ENCODE measurements at regions of chr21 and their contacts with region 1.

Region 1: DNA sequence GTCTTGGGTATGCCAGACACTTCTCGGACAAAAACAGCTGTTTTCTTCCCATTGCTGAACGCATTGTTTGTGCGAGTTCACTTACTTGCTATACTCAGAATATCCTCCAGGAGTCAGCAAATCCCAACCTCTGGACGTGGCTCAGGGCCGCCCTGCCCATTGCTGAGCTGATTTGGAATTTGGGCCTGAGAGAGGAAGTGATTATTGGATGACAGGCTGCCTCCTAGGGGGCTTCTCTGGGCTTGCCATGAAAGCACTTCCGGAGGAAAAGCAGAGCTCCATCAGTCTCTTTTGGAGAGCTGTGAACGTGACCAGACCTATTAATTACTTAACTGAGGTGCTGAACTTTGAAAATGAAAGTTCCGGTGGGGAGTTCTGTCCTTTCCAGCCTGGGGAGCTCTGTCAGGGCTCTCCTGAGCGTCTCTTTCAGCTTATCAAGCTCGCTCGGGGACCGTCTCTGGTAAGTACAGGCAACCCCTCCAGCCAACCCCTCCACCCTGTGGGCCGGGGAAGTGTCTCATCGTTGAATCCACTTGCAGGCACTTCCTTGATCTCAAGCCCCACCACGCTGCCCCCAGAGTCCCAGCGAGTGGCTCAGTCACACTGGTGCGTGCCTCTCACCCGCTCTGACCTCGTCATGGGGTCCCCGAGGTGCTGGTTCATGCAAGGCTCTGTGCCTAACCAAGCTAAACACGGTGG is 76.9 kb downstream of the CLIC6 start:
- DNase-seq: peak; percentile 34 to 77
- ATAC-seq: peak; percentile 80 to 93 (median 93)
- H3K4me3 ChIP-seq: no peak overlapping the region
- H3K4me3 Mint-ChIP-seq: peak overlapping the region; percentile 72
- H3K27ac ChIP-seq: no peak overlapping the region
- H3K27ac Mint-ChIP-seq: peak overlapping the region in 1 of 2 donors; percentile 57
- H3K4me1 ChIP-seq: peaks cover 7% of the 10 kb centered on the region
- H3K4me1 Mint-ChIP-seq: peaks cover 6% of the 10 kb centered on the region in 2 donors
- H3K27me3 ChIP-seq: no peaks in the 10 kb centered on the region
- H3K27me3 Mint-ChIP-seq: peaks cover 13 to 21% of the 10 kb centered on the region in 2 donors
- CTCF ChIP-seq: peak; percentile 88

Region 2: DNA sequence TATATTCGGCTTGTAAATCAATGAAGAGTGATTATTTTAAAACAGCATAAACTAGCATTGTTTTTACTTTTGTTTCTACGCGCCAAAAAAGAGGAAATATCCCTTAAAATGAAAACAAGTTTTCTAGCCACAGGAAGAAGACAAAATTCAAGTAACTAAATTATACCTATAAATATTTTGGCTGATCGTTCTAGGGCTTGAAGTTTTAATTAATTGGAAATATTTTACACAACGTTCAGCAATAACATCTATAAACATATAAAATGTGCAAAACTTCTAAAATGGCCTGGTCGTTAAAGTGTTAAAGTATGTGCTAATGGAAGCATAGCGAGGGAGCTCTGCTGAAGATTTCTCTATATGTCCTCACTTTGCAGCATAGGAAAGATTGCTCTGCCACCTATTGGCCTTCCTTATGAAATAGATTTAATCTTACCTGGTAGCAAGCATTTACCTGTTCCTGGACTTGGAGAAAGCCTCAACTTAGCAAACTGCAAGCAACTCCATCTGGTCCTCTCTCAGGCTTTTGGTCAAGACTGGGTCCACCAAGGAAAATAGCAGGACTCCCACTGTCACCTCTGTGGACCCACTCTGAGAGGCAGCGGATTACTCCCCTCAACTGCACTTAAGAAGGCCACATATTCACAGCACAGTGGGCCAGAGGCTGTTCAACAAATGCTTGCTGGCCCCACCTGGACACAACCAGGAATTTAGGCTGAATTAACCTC is 654.7 kb after region 1 on chr21:
- intact Hi-C with region 1: loop called (anchors 1 kb)
- DNase-seq: peak; percentile 15 to 81
- ATAC-seq: peak; percentile 64 to 83 (median 77)
- H3K4me3 ChIP-seq: no peak overlapping the region
- H3K4me3 Mint-ChIP-seq: no peak overlapping the region
- H3K27ac ChIP-seq: no peak overlapping the region
- H3K27ac Mint-ChIP-seq: no peak overlapping the region
- H3K4me1 ChIP-seq: no peaks in the 10 kb centered on the region
- H3K4me1 Mint-ChIP-seq: no peaks in the 10 kb centered on the region
- H3K27me3 ChIP-seq: no peaks in the 10 kb centered on the region
- H3K27me3 Mint-ChIP-seq: peaks cover 17 to 33% of the 10 kb centered on the region in 2 donors
- CTCF ChIP-seq: peak; percentile 62

Region 3: DNA sequence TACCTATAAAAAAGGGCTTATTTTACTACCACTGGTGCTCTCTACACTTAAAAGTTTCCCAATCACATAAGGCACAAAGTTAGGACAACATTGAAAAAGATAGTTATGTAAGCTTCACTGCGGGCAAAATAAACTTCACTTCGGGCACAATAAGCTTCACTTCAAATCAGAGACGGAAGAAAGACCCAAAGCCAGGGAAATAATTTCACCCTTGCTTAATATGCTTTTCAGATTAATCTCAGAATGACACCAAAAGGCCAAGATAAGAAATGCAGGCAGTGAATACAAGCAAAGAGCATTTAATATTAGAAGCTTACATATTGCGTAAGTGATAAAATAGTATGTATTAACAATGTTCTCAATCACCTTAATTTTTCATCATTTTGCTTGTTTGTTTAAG is 870.4 kb after region 1 on chr21:
- intact Hi-C with region 1: loop called (anchors 10 kb)
- DNase-seq: peak in 1 of 2 donors; percentile 32
- ATAC-seq: no peak
- H3K4me3 ChIP-seq: no peak overlapping the region
- H3K4me3 Mint-ChIP-seq: no peak overlapping the region
- H3K27ac ChIP-seq: no peak overlapping the region
- H3K27ac Mint-ChIP-seq: no peak overlapping the region
- H3K4me1 ChIP-seq: no peaks in the 10 kb centered on the region
- H3K4me1 Mint-ChIP-seq: peaks cover 8 to 17% of the 10 kb centered on the region in 2 donors
- H3K27me3 ChIP-seq: no peaks in the 10 kb centered on the region
- H3K27me3 Mint-ChIP-seq: peaks cover 21 to 54% of the 10 kb centered on the region in 2 donors
- CTCF ChIP-seq: no peak

Region 4: GRCh38 chr21:35840197-35840799 is 1094.6 kb after region 1 on chr21:
- intact Hi-C with region 1: loop called (anchors 1 kb)
- DNase-seq: peak; percentile 20 to 78
- ATAC-seq: peak in 1 of 3 donors; percentile 66
- H3K4me3 ChIP-seq: no peak overlapping the region
- H3K4me3 Mint-ChIP-seq: no peak overlapping the region
- H3K27ac ChIP-seq: no peak overlapping the region
- H3K27ac Mint-ChIP-seq: no peak overlapping the region
- H3K4me1 ChIP-seq: no peaks in the 10 kb centered on the region
- H3K4me1 Mint-ChIP-seq: no peaks in the 10 kb centered on the region
- H3K27me3 ChIP-seq: no peaks in the 10 kb centered on the region
- H3K27me3 Mint-ChIP-seq: peaks cover 2 to 7% of the 10 kb centered on the region in 2 donors
- CTCF ChIP-seq: peak; percentile 81

Region 5: DNA sequence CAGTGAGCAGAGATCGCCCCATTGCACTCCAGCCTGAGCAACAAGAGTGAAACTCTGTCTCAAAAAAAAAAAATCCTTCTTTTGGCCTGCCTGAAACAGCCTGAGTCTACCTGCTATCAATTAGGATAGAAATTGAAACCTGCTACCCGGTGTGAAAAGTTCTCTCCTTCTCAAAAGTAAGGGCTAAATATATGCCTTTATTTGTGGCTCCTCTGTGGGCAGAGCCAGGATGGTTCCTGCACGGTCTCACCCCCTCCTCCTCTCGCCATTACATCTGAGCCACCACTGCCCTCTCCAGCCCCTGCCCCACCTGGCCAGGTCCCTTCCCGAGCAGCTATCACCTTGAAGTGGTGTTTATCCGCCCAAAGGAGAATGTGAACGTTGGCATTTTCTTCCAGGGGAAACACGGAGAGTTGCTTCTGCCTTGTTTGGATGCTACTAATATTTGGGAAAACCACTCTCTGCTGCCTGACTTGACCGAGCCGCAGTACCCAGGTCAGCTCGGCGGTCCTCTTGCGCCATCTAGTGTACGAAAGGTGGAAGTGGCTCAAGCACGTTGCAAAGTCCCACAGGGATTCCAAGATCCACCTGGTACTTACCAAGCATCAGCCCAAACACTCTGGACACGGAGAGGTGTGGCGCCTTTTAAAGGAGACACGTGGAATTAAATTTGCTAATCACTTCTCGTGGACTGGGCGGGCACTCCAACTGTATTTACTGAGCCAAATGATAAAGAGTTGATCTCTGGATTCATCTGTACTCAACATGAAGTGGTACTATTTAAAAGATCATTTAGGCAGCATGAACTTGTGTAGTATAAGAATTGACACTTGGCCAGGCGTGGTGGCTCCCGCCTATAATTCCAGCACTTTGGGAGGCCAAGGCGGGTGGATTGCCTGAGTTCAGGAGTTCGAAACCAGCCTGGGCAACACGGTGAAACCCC is 1282.7 kb after region 1 on chr21:
- intact Hi-C with region 1: loop called (anchors 1 kb)
- DNase-seq: peak; percentile 63 to 85
- ATAC-seq: peak; percentile 84 to 96 (median 90)
- H3K4me3 ChIP-seq: no peak overlapping the region
- H3K4me3 Mint-ChIP-seq: peak overlapping the region; percentile 2
- H3K27ac ChIP-seq: no peak overlapping the region
- H3K27ac Mint-ChIP-seq: no peak overlapping the region
- H3K4me1 ChIP-seq: peaks cover 4% of the 10 kb centered on the region
- H3K4me1 Mint-ChIP-seq: peaks cover 7% of the 10 kb centered on the region in 2 donors
- H3K27me3 ChIP-seq: no peaks in the 10 kb centered on the region
- H3K27me3 Mint-ChIP-seq: no peaks in the 10 kb centered on the region
- CTCF ChIP-seq: peak; percentile 89